Transverse colon (tissue), 4 donors: ENCODE measurements at regions of chr7 and their contacts with region 1.

Region 1: DNA sequence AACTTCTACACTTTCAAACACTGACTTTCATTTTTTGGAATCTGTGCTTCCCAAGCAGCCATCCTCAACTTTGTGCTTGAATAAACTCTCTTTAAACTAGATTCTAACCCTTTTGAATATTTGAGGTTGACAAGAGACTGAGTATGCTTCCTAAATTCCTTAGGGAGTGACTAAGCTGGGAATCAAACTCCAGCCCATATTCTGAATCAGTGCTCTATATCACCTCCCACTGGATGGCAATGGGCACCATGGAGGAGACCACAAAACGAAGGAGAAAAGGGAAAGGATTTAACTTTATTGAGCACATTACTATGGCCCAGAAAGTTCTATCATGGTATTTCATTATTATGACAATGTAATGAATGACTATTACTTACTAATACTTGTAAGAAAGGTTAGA is 17.2 kb upstream of the SLC26A4 start:
- DNase-seq: no peak
- H3K4me3 ChIP-seq: no peak overlapping the region
- H3K27ac ChIP-seq: no peak overlapping the region
- H3K4me1 ChIP-seq: peaks cover 0 to 10% (median 0%) of the 10 kb centered on the region in 4 donors
- H3K27me3 ChIP-seq: no peaks in the 10 kb centered on the region
- CTCF ChIP-seq: no peak
- EP300 ChIP-seq: no peak
- POLR2A ChIP-seq: no peak

Region 2: DNA sequence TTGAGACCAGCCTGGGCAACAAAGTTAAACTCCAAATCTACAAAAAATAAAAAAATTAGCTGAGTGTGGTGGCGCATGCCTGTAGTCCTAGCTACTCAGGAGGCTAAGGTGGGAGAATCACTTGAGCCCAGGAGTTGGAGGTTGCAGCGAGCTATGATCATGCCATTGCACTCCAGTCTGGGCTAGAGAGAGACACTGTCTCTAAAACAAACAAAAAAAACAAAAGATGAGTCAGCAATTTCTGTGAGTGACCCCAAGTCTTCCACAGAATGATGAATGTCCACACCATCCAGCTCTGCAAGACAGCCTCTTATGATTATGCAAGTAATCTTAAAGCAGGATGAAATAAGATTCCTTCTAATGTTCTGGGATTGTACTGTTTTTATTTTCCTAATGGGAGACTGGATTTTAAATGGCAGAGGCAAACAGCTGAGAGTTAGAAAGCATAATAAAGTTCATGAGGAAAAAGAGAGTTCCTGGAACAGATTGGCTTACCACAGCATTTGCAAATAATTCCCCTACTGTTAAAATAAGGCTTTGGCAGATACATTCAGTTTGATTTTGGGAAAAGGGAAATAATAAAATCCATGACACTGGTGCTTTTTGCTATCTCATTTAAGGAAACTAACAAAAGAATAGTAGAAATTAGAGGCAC is 617.8 kb before region 1 on chr7:
- in situ Hi-C with region 1: no loop called
- intact Hi-C with region 1: loop called (anchors 5 kb)
- DNase-seq: no peak
- H3K4me3 ChIP-seq: no peak overlapping the region
- H3K27ac ChIP-seq: peak overlapping the region in 1 of 4 donors; percentile 27
- H3K4me1 ChIP-seq: no peaks in the 10 kb centered on the region
- H3K27me3 ChIP-seq: no peaks in the 10 kb centered on the region
- CTCF ChIP-seq: no peak
- EP300 ChIP-seq: no peak
- POLR2A ChIP-seq: no peak